Mammary epithelial cell (primary cell): ENCODE measurements at regions of chr17 and their contacts with region 1.

Region 1: DNA sequence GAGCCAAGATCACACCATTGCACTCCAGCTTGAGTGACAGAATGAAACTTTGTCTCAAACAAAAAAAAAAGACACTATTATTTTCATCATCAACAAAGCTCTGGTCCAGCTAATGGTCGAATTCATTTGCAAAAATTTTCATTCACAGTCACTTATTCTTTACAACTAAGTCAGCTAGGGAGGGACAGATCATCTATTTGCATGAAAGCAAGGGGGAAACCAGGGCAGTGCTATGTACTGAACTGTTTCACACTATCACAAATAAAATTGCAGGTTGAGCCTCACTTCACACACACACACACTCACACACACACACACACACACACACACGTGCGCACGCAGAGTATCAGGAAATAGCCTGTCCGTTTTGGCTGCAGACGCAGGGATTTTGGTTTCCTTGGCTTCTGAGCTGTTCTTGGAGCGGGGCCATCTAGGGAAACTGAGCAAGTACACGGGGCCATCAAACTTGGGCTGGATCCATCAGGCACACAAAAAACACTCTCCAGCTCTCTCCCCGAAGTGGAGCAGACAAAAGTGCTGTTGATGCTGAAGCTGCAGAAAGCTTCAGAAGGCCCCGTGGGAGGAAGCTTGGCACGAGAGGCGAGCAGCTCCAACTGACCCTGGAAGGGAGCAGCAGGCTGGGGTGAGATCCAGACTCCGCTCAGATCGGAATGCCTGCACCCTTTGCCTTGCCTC is 44.3 kb upstream of the HELZ start:
- DNase-seq: peak; percentile 6
- H3K4me3 ChIP-seq: no peak overlapping the region
- H3K27ac ChIP-seq: no peak overlapping the region
- H3K4me1 ChIP-seq: no peaks in the 10 kb centered on the region
- H3K27me3 ChIP-seq: no peaks in the 10 kb centered on the region
- CTCF ChIP-seq: no peak

Region 2: GRCh38 chr17:66906321-66907278 is 382.7 kb before region 1 on chr17:
- CTCF ChIA-PET with region 1: no interaction called
- dilution Hi-C with region 1: no loop called
- in situ Hi-C with region 1: no loop called
- intact Hi-C with region 1: no loop called
- DNase-seq: peak; percentile 59
- H3K4me3 ChIP-seq: no peak overlapping the region
- H3K27ac ChIP-seq: no peak overlapping the region
- H3K4me1 ChIP-seq: peaks cover 19% of the 10 kb centered on the region
- H3K27me3 ChIP-seq: no peaks in the 10 kb centered on the region
- CTCF ChIP-seq: peak; percentile 96 to 97

Region 3: DNA sequence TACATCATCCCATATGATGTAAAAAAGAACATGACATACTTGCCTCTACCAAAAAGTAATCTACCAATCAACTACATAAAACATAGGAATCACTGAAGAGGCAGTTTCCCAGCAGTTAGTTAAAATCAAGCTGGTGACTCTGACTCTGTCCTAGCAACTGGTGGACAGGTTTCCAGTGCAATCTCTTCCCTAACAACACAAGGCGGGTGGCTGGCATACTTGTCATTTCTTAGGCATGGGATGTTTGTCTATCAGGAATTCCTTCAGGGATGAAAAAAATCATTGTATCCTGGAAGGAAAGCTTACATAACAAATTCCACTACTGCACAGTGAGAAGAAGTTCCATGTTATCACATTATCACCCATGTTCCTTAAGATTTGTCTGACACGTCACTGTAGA is 95.2 kb before region 1 on chr17:
- CTCF ChIA-PET with region 1: no interaction called
- dilution Hi-C with region 1: no loop called
- in situ Hi-C with region 1: no loop called
- intact Hi-C with region 1: no loop called
- DNase-seq: no peak
- H3K4me3 ChIP-seq: no peak overlapping the region
- H3K27ac ChIP-seq: no peak overlapping the region
- H3K4me1 ChIP-seq: no peaks in the 10 kb centered on the region
- H3K27me3 ChIP-seq: no peaks in the 10 kb centered on the region
- CTCF ChIP-seq: no peak

Region 4: GRCh38 chr17:67239597-67239996 is 49.7 kb before region 1 on chr17:
- CTCF ChIA-PET with region 1: no interaction called
- dilution Hi-C with region 1: loop called (anchors 5 kb)
- in situ Hi-C with region 1: no loop called
- intact Hi-C with region 1: no loop called
- DNase-seq: no peak
- H3K4me3 ChIP-seq: no peak overlapping the region
- H3K27ac ChIP-seq: no peak overlapping the region
- H3K4me1 ChIP-seq: peaks cover 5% of the 10 kb centered on the region
- H3K27me3 ChIP-seq: no peaks in the 10 kb centered on the region
- CTCF ChIP-seq: no peak

Region 5: GRCh38 chr17:67359960-67360773 is 70.8 kb after region 1 on chr17:
- CTCF ChIA-PET with region 1: no interaction called
- dilution Hi-C with region 1: loop called (anchors 5 kb)
- in situ Hi-C with region 1: no loop called
- intact Hi-C with region 1: no loop called
- DNase-seq: no peak
- H3K4me3 ChIP-seq: no peak overlapping the region
- H3K27ac ChIP-seq: no peak overlapping the region
- H3K4me1 ChIP-seq: peaks cover 37% of the 10 kb centered on the region
- H3K27me3 ChIP-seq: no peaks in the 10 kb centered on the region
- CTCF ChIP-seq: peak; percentile 18 to 37